ENCODE measurements at regions of chr2 and their contacts with region 1.

Region 1: DNA sequence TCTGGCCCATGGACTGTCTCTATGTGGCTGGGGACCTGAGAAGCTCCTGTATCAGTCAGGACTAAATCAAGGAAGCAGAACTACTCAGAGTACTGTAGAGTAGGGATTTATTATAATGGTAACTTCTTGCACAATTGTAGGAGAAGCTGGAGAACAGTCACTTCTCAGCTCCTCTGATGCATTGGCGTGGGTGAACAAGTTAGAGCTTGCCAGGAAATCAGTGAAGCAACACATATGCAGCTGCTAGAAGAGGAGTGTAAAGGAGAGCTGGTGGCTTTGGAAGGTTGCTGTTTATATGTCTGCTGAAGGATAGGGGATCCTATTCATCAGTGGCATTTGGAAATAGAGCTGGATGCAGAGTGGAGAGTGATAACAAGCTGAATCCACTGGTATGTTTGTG is 215.5 kb upstream of the CWC22 start:
- DNase-seq: peak; percentile 95
- H3K4me3 Mint-ChIP-seq: peak overlapping the region; percentile 61
- H3K27ac Mint-ChIP-seq: peak overlapping the region; percentile 61
- H3K4me1 Mint-ChIP-seq: peaks cover 20% of the 10 kb centered on the region
- H3K27me3 Mint-ChIP-seq: no peaks in the 10 kb centered on the region
- CTCF ChIP-seq: no peak

Region 2: GRCh38 chr2:179963626-179964025 is 259.0 kb before region 1 on chr2:
- CTCF ChIA-PET with region 1: no interaction called
- POLR2A ChIA-PET with region 1: no interaction called
- intact Hi-C with region 1: no loop called
- DNase-seq: peak; percentile 40
- H3K4me3 Mint-ChIP-seq: no peak overlapping the region
- H3K27ac Mint-ChIP-seq: peak overlapping the region; percentile 88
- H3K4me1 Mint-ChIP-seq: peaks cover 8% of the 10 kb centered on the region
- H3K27me3 Mint-ChIP-seq: no peaks in the 10 kb centered on the region
- CTCF ChIP-seq: no peak

Region 3: DNA sequence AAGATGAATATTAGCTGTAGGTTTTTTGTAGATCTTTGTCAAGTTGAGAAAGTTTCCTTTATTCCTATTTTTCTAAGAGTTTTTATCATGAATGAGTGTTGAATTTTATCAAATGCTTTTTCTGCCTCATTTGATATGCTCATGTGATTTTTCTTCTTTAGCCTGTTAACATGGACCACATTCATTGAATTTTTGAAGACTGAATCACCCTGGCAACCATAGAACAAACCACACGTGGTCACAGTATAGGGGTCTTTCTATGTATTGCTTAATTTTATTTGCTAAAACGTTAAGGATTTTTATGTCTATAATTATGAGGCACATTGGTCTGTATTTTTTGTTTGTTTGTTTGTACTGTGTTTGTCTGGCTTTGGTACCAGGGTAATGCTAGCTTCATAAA is 13.8 kb before region 1 on chr2:
- CTCF ChIA-PET with region 1: interaction called, 4 read pairs
- POLR2A ChIA-PET with region 1: interaction called, 12 read pairs
- intact Hi-C with region 1: no loop called
- DNase-seq: no peak
- H3K4me3 Mint-ChIP-seq: no peak overlapping the region
- H3K27ac Mint-ChIP-seq: peak overlapping the region; percentile 79
- H3K4me1 Mint-ChIP-seq: peaks cover 14% of the 10 kb centered on the region
- H3K27me3 Mint-ChIP-seq: no peaks in the 10 kb centered on the region
- CTCF ChIP-seq: no peak

Region 4: DNA sequence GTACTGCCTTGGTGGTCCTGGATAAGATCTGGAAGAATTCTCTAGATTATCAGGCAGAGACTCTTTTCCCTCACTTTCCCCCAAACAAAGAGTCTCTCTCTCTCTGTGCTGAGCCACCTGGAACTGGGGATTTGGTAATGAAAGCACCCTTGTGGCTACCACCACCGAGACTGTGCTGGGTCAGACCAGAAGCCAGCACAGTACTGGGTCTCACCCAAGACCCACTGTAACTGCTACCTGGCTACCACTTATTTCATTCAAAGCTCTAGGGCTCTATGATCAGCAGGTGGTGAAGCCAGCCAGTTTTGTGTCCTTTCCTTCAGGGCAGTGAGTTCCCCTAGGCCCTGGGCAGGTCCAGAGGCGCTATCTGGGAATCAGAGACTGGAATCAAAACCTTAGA is 54.1 kb after region 1 on chr2:
- CTCF ChIA-PET with region 1: no interaction called
- POLR2A ChIA-PET with region 1: no interaction called
- intact Hi-C with region 1: no loop called
- DNase-seq: no peak
- H3K4me3 Mint-ChIP-seq: no peak overlapping the region
- H3K27ac Mint-ChIP-seq: no peak overlapping the region
- H3K4me1 Mint-ChIP-seq: no peaks in the 10 kb centered on the region
- H3K27me3 Mint-ChIP-seq: no peaks in the 10 kb centered on the region
- CTCF ChIP-seq: no peak